Heart right ventricle (tissue), 16 donors: ENCODE measurements at regions of chr1 and their contacts with region 1.

Region 1: GRCh38 chr1:118785246-118785645 is 202.9 kb downstream of the TBX15 start:
- DNase-seq: no peak
- ATAC-seq: no peak
- H3K4me3 ChIP-seq: no peak overlapping the region
- H3K27ac ChIP-seq: no peak overlapping the region
- H3K4me1 ChIP-seq: no peaks in the 10 kb centered on the region
- H3K27me3 ChIP-seq: no peaks in the 10 kb centered on the region
- CTCF ChIP-seq: no peak

Region 2: DNA sequence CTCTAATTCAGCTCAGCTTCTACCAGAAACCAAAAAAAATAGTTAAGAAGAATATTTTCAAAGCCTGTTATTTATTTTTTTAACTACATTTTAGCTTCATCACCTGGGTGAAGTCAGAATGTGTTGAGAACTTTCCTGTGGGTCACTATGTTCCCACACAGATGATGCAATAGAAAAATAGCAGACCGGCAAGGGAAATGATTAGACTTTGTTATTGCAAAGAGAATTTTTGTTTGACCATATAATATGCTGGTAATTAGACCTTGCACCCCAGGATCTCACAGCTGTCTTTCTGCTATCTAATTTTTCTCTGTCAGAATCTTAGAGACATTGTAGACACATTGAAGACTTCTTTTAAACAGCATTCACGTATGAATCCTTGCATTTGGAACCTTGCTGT is 96.4 kb before region 1 on chr1:
- intact Hi-C with region 1: no loop called
- DNase-seq: no peak
- ATAC-seq: no peak
- H3K4me3 ChIP-seq: no peak overlapping the region
- H3K27ac ChIP-seq: no peak overlapping the region
- H3K4me1 ChIP-seq: no peaks in the 10 kb centered on the region
- H3K27me3 ChIP-seq: no peaks in the 10 kb centered on the region
- CTCF ChIP-seq: no peak

Region 3: DNA sequence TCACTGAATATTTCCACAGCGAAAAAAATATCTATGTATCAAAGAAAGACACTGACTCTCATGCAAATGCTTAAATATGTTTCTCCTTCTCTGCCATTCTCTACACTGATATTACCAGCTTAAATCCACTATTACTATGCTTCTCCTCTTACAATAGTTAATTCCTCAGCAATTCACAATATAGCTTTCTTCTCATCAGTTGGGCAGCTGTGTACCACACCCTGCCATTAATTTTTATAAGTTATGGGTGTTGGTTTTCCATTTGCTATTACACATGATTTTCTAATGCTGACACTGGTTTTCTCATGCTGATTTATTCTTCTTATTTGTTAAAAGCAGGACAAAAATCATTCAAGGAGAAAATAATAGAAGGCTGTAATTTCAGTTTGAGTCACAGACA is 48.9 kb before region 1 on chr1:
- intact Hi-C with region 1: no loop called
- DNase-seq: no peak
- ATAC-seq: no peak
- H3K4me3 ChIP-seq: no peak overlapping the region
- H3K27ac ChIP-seq: no peak overlapping the region
- H3K4me1 ChIP-seq: no peaks in the 10 kb centered on the region
- H3K27me3 ChIP-seq: no peaks in the 10 kb centered on the region
- CTCF ChIP-seq: no peak

Region 4: GRCh38 chr1:118767971-118768370 is 17.3 kb before region 1 on chr1:
- intact Hi-C with region 1: loop called in 1 of 10 experiments (anchors 2 kb)
- DNase-seq: no peak
- ATAC-seq: no peak
- H3K4me3 ChIP-seq: no peak overlapping the region
- H3K27ac ChIP-seq: no peak overlapping the region
- H3K4me1 ChIP-seq: no peaks in the 10 kb centered on the region
- H3K27me3 ChIP-seq: no peaks in the 10 kb centered on the region
- CTCF ChIP-seq: no peak

Region 5: DNA sequence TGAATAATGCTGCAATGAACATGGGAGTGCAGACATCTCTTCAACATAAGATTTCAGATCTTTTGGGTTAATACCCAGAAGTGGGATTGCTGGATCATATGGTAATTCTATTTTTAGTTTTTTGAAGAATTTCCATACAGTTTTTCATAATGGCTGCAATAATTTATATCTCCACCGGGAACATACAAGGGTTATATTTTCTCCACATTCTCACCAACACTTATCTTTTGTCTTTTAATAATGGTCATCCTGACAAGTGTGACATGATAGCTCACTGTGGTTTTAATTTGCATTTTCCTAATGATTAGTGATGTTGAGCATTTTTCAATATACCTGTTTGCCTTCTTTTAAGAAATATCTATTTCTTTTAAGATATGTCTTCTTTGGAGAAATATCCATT is 399.7 kb after region 1 on chr1:
- intact Hi-C with region 1: no loop called
- DNase-seq: no peak
- ATAC-seq: no peak
- H3K4me3 ChIP-seq: no peak overlapping the region
- H3K27ac ChIP-seq: no peak overlapping the region
- H3K4me1 ChIP-seq: no peaks in the 10 kb centered on the region
- H3K27me3 ChIP-seq: no peaks in the 10 kb centered on the region
- CTCF ChIP-seq: no peak

Region 6: GRCh38 chr1:119204197-119204960 is 419.1 kb after region 1 on chr1:
- intact Hi-C with region 1: no loop called
- DNase-seq: no peak
- ATAC-seq: no peak
- H3K4me3 ChIP-seq: no peak overlapping the region
- H3K27ac ChIP-seq: no peak overlapping the region
- H3K4me1 ChIP-seq: no peaks in the 10 kb centered on the region
- H3K27me3 ChIP-seq: no peaks in the 10 kb centered on the region
- CTCF ChIP-seq: no peak